Body of pancreas (tissue), 4 donors: ENCODE measurements at regions of chr18 and their contacts with region 1.

Region 1: GRCh38 chr18:62128157-62128556 is 58.7 kb downstream of the PIGN start:
- DNase-seq: no peak
- ATAC-seq: no peak
- H3K4me3 ChIP-seq: no peak overlapping the region
- H3K27ac ChIP-seq: no peak overlapping the region
- H3K4me1 ChIP-seq: no peaks in the 10 kb centered on the region
- H3K27me3 ChIP-seq: no peaks in the 10 kb centered on the region
- CTCF ChIP-seq: no peak
- POLR2A ChIP-seq: no peak

Region 2: DNA sequence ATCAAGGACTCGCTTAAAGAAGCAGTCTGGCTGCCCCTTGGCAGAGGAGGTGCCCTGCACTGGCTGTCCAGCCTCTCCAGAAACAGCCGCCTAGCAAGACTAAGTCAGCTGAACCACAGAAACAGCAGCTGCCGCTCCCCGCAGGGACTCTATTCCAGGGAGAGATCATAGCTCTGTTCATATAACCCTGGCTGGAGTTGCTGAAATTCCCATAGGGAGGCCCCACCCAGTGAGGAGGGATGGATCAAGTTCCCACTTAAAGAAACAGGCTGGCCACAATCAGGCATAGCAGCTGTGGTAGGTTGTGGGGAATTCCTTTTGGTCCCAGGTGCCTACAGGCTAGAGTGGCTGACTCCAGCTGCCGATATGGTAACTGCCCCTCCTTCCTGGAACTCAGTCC is 1681.3 kb before region 1 on chr18:
- intact Hi-C with region 1: no loop called
- DNase-seq: no peak
- ATAC-seq: no peak
- H3K4me3 ChIP-seq: no peak overlapping the region
- H3K27ac ChIP-seq: no peak overlapping the region
- H3K4me1 ChIP-seq: no peaks in the 10 kb centered on the region
- H3K27me3 ChIP-seq: no peaks in the 10 kb centered on the region
- CTCF ChIP-seq: no peak
- POLR2A ChIP-seq: no peak

Region 3: GRCh38 chr18:61581578-61582201 is 546.5 kb before region 1 on chr18:
- intact Hi-C with region 1: loop called (anchors 10 kb)
- DNase-seq: peak; percentile 70 to 80 (median 74)
- ATAC-seq: peak; percentile 90
- H3K4me3 ChIP-seq: no peak overlapping the region
- H3K27ac ChIP-seq: peak overlapping the region in 1 of 4 donors; percentile 21
- H3K4me1 ChIP-seq: peaks cover 12% of the 10 kb centered on the region
- H3K27me3 ChIP-seq: no peaks in the 10 kb centered on the region
- CTCF ChIP-seq: peak; percentile 84 to 99 (median 92)
- POLR2A ChIP-seq: no peak

Region 4: DNA sequence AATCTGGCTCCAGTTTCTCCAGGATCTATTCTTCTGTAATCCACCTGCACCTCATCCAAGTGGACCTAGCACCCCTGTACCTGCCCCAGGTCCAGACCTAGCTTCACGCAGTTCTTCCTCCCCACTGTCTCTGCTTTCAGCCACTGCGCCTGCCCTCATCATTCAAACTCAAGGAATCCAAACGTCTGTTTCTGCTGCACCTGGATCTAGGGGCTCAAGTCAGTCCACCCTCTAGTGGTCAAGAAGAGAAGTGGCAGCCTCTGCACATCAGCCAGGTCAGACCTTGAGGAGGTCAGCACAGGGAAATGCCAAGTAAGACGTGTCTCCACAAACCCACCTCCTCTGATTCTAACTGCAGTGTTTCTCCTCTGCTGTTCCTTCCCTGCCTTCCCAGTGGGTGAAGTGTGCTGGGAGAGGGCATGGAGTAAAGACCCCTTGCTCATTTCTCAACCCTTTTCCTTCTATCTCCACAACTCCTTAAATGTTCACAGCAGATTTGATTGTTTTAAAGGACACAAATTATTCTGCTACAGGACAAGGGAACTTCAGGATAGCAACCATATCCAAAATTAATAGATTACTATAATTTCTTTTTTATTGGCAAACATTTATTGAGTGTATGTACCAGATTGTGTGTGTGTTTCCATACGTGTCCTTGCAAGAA is 226.7 kb before region 1 on chr18:
- intact Hi-C with region 1: loop called (anchors 10 kb)
- DNase-seq: peak; percentile 53 to 64 (median 56)
- ATAC-seq: peak; percentile 80
- H3K4me3 ChIP-seq: no peak overlapping the region
- H3K27ac ChIP-seq: no peak overlapping the region
- H3K4me1 ChIP-seq: peaks cover 4% of the 10 kb centered on the region
- H3K27me3 ChIP-seq: no peaks in the 10 kb centered on the region
- CTCF ChIP-seq: peak; percentile 81 to 90 (median 88)
- POLR2A ChIP-seq: no peak

Region 5: GRCh38 chr18:62287781-62288664 is 159.9 kb after region 1 on chr18:
- intact Hi-C with region 1: no loop called
- DNase-seq: no peak
- ATAC-seq: no peak
- H3K4me3 ChIP-seq: no peak overlapping the region
- H3K27ac ChIP-seq: no peak overlapping the region
- H3K4me1 ChIP-seq: no peaks in the 10 kb centered on the region
- H3K27me3 ChIP-seq: no peaks in the 10 kb centered on the region
- CTCF ChIP-seq: no peak
- POLR2A ChIP-seq: no peak